Activated naive CD4-positive, alpha-beta T cell treated with anti-CD3 and anti-CD28 coated beads for 36 hours (primary cell): ENCODE measurements at regions of chr6 and their contacts with region 1.

Region 1: DNA sequence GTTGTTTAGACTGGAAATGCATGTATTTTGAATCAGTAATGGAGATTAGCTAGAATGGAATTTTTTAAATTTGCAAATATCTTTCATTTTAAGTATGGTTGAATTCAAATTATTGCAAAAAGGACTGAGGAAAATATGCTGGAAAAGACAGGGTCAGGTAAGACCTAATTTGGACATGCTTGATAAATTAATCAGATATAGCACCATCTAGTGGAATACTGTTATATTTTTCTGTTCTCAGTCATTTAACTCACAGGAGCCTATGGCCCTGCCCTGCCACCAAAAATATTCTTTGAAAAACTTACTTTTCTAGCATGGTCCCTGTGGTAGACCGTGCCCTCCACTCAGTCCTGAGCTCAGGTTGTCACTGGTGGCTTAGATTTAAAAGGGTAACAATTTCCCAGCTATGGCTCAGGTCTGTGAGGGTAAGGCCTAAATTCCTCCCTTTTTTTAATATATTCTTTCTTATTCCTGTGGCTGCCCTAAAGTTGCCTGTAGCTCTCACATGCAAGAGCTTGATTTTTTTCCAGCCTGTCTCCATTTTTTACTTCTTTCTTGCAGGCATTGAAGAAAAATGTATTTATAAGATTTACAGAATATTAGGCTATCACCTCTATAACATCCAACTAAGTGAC is 25.3 kb upstream of the KIAA1586 start:
- DNase-seq: peak; percentile 8
- H3K4me3 Mint-ChIP-seq: no peak overlapping the region
- H3K27ac Mint-ChIP-seq: no peak overlapping the region
- H3K4me1 Mint-ChIP-seq: no peaks in the 10 kb centered on the region
- H3K27me3 Mint-ChIP-seq: peaks cover 6% of the 10 kb centered on the region

Region 2: DNA sequence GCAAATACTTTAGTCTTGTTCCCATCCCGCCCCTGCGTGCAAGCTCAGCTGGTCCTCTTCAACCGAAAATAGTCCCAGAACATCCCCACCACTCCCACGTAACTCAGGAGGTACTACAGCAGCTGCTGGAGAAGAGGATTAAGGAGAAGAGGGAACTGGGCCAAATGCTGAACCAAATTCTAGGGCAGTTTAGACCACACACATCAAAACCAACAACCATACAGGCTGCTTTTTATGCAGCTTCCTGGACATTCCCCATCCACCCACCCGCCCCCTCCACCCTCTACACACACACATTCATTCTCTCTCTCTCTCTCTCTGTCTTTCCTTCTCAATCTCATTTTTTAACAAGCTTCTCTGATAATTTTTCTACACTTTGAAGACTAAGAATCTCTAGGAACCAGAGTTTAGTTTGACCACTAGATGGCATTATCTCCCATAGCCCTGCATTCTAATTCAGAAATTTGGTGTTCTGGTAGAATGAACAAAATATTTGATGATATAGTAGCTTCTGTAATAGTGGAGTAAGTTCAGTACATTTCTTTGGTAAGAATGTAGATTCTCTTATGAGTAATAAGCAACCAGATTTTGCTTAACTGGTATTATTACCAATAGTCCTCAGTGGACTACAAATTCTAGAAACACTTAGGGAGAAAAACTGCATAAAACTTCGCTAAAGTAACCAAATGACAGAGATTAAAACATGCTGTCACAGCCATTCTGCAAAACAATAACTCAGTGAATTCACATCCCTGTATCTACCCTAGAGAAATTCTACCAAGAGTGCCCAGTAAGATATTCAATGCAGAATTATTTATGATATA is 118.3 kb before region 1 on chr6:
- CTCF ChIA-PET with region 1: interaction called, 16 read pairs
- intact Hi-C with region 1: loop called (anchors 1 kb)
- DNase-seq: no peak
- H3K4me3 Mint-ChIP-seq: no peak overlapping the region
- H3K27ac Mint-ChIP-seq: no peak overlapping the region
- H3K4me1 Mint-ChIP-seq: peaks cover 2% of the 10 kb centered on the region
- H3K27me3 Mint-ChIP-seq: peaks cover 5% of the 10 kb centered on the region